ENCODE measurements at regions of chr6 and their contacts with region 1.

Region 1: DNA sequence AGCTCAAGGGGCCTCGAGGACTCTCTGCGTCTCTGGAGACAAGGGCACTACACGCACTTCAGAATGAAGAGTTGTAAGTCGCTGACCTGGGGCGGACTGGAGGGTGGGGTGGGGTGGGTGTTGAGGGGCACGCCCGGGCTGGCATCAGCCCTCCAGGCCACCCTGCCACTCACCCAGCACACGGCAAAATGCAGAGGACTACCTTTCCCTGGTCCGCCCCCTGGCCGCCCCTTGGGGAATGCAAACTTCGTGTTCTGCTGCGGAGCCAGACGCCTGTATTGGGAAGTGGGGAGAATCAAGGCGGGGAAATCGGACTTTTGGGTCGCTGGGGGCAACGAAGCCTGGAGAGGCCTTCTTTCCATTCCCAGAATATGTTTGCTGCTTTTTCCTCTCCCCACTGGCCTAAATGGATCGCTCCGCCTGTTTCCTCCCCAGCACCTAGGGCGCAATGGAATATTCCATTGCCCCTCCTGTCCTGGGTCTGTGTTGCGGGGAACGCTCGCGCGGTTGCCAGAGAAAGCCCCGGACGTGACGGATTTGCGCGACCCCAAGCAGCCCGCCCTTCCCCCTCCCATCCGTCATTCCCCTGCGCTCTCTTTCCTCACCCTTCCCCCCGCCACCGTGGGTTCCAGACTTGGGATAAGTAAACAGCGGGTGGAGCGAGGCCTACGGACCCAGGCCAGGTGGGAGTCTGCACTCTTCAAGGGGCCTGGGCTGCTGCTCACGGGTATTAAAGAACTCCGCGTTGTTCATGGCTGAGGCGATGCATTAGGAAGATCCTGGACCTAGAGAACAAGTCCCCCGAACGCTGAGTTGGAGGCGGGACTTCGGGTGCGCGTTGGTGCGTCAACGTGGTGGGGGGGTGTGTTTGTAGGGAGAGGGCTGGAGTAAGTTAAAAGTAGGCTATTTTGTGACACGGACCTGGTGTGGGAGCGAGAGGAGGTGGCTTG is at the start of gene PPT2:
- DNase-seq: peak; percentile 55
- H3K4me3 Mint-ChIP-seq: peak within 1 kb of the TSS; percentile 91
- H3K27ac Mint-ChIP-seq: peak within 1 kb of the TSS; percentile 82
- H3K4me1 Mint-ChIP-seq: peaks cover 18% of the 10 kb centered on the region
- H3K27me3 Mint-ChIP-seq: peaks cover 31% of the 10 kb centered on the region
- total RNA-seq, gene PPT2: 11.5 and 12.7 TPM in 2 replicates

Region 2: GRCh38 chr6:32087574-32088486 is 66.0 kb before region 1 on chr6:
- intact Hi-C with region 1: loop called (anchors 2 kb)
- DNase-seq: peak; percentile 51
- H3K4me3 Mint-ChIP-seq: no peak overlapping the region
- H3K27ac Mint-ChIP-seq: no peak overlapping the region
- H3K4me1 Mint-ChIP-seq: peaks cover 10% of the 10 kb centered on the region
- H3K27me3 Mint-ChIP-seq: peaks cover 62% of the 10 kb centered on the region

Region 3: DNA sequence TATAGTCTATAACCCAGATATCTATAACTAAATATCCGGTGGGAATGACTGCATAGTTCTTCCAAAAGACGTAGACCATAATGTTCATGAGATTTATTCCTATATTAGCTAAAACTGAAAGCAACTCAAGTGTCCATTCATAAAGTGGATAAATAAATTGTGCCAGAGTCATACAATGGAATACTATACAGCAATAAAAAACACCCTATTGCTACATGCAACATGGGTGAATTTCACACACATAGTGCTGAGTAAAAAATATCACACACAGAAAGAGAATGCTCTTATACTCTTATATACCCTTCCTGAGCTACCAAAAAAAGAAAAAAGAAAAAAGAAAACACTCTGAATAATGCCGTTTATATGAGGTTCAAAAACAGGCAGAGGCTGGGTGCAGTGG is 51.6 kb before region 1 on chr6:
- intact Hi-C with region 1: no loop called
- DNase-seq: no peak
- H3K4me3 Mint-ChIP-seq: no peak overlapping the region
- H3K27ac Mint-ChIP-seq: no peak overlapping the region
- H3K4me1 Mint-ChIP-seq: no peaks in the 10 kb centered on the region
- H3K27me3 Mint-ChIP-seq: peaks cover 24% of the 10 kb centered on the region

Region 4: DNA sequence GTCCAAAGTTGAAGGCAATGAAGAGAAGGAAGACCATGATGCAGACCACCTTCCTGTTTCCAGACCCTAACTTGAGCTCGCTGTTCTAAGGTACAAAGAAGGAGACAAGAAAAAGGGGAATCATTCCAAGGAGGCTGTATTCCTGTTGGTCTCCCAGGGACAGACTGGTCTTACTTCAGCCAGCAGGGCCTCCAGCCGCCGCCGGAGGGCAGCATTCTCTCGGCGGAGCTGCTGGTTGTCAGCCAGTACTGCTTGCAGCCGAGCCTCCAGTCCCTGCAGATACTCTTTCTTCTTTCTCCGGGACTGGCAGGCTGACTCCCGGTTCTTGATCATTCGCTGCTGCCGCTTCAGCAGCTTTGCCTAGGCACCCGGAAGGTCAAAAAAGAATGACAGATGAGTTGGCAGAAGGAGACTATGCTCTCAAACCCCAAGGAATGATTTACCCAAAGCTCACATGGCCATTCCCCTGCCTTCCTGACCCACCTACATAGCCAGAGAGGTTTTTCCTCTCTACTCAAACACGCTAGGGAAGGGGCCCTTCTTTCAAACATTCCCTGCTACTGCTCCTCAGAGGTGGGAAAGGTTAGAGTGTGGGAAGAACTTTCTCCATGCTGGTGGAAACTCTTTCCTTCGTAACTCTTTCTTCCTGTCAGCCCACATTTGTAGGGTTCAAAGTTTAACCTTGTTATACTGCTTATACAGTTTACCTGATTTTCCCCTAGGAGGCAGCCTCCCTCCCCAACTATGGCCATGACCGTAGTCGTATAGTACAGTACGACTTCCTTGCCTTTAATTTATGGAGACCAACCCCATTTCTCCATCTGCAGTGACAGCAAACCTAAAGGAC is 34.8 kb before region 1 on chr6:
- intact Hi-C with region 1: loop called (anchors 5 kb)
- DNase-seq: peak; percentile 62
- H3K4me3 Mint-ChIP-seq: no peak overlapping the region
- H3K27ac Mint-ChIP-seq: no peak overlapping the region
- H3K4me1 Mint-ChIP-seq: peaks cover 6% of the 10 kb centered on the region
- H3K27me3 Mint-ChIP-seq: no peaks in the 10 kb centered on the region

Region 5: GRCh38 chr6:32127717-32128592 is 25.9 kb before region 1 on chr6 and contains the start of gene ATF6B:
- intact Hi-C with region 1: loop called (anchors 1 kb)
- DNase-seq: peak; percentile 98
- H3K4me3 Mint-ChIP-seq: peak within 1 kb of the TSS; percentile 99
- H3K27ac Mint-ChIP-seq: peak within 1 kb of the TSS; percentile 97
- H3K4me1 Mint-ChIP-seq: peaks cover 36% of the 10 kb centered on the region
- H3K27me3 Mint-ChIP-seq: no peaks in the 10 kb centered on the region
- total RNA-seq, gene ATF6B: 86.9 and 91.2 TPM in 2 replicates

Region 6: GRCh38 chr6:32290886-32291450 is 137.1 kb after region 1 on chr6:
- intact Hi-C with region 1: no loop called
- DNase-seq: no peak
- H3K4me3 Mint-ChIP-seq: no peak overlapping the region
- H3K27ac Mint-ChIP-seq: no peak overlapping the region
- H3K4me1 Mint-ChIP-seq: no peaks in the 10 kb centered on the region
- H3K27me3 Mint-ChIP-seq: peaks cover 58% of the 10 kb centered on the region

Measured in activated T-helper 2 cell treated with anti-CD3 and anti-CD28 coated beads, Interferon-gamma antibody, Interleukin-2, Interleukin-4, amounts not matched to agents 10 μg/mL and 5 μg/mL and 100 μg/mL, durations not matched to agents 14 hours and 24 hours and 36 hours (primary cell).